ENCODE measurements at regions of chr11 and their contacts with region 1.

Region 1: GRCh38 chr11:121451986-121452608 is at the start of gene SORL1:
- DNase-seq: peak; percentile 92
- H3K4me3 Mint-ChIP-seq: peak within 1 kb of the TSS; percentile 93
- H3K27ac Mint-ChIP-seq: peak within 1 kb of the TSS; percentile 99
- H3K4me1 Mint-ChIP-seq: peaks cover 78% of the 10 kb centered on the region
- H3K27me3 Mint-ChIP-seq: no peaks in the 10 kb centered on the region
- total RNA-seq, gene SORL1: 28.4 and 30.3 TPM in 2 replicates

Region 2: DNA sequence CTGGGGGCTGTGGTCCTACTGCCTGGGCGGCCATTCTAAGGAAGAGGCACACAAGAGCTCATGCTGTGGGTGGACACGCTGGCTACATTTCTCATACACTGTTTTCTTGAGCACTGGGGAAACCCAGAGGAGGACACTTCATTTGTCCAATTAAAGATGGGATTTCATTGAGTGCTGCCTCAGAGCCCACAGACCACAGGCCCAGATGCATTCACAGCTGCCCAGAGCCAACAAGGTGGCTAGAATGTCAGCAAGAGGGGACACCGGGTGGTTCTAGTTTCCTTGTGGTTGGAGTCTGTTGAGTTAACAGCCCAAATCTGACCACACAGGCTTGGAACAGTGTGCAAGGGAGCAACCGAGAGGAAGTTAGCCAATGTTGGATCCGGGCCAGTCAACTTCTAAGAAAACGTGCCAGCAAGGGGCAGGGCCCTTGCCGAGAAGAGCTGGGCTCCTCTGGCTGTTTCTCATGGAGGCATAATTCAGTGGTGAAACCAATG is 35.0 kb before region 1 on chr11:
- intact Hi-C with region 1: loop called (anchors 2 kb)
- DNase-seq: peak; percentile 83
- H3K4me3 Mint-ChIP-seq: peak overlapping the region; percentile 42
- H3K27ac Mint-ChIP-seq: peak overlapping the region; percentile 72
- H3K4me1 Mint-ChIP-seq: peaks cover 55% of the 10 kb centered on the region
- H3K27me3 Mint-ChIP-seq: no peaks in the 10 kb centered on the region

Region 3: DNA sequence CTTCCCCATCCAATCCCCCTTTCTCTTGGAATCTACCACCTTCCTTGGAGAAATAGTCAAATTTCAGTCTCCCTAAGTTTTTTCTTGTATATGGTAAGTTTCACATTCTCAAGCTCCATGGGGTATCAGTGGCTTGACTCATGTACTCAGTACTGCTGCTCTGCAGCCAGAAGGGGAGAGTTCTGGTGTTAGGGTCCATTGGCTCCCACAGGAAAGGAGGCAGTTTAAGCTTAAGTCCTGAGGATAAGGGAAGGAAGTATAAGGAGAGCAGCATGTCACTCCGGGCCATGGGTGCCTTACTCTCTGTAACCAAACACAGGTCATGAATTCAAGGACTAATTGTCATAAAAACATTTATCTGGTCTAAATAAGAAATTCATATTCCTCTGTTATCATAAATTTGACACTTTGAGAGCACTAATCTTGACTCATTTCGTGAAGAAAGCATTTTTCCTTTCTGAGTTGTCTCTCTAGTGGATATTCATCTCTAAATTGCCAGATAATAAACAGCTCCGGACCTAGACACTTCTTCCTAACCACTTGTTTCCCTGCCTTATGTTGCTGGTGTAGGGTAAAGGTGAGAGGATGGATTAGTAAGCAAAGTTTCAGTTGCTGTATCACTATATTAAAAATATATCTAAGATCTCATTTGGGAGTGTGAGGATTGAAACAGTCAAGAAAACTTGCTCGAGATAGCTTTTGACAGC is 20.1 kb before region 1 on chr11:
- intact Hi-C with region 1: loop called (anchors 1 kb)
- DNase-seq: no peak
- H3K4me3 Mint-ChIP-seq: no peak overlapping the region
- H3K27ac Mint-ChIP-seq: peak overlapping the region; percentile 63
- H3K4me1 Mint-ChIP-seq: peaks cover 18% of the 10 kb centered on the region
- H3K27me3 Mint-ChIP-seq: peaks cover 2% of the 10 kb centered on the region

Region 4: DNA sequence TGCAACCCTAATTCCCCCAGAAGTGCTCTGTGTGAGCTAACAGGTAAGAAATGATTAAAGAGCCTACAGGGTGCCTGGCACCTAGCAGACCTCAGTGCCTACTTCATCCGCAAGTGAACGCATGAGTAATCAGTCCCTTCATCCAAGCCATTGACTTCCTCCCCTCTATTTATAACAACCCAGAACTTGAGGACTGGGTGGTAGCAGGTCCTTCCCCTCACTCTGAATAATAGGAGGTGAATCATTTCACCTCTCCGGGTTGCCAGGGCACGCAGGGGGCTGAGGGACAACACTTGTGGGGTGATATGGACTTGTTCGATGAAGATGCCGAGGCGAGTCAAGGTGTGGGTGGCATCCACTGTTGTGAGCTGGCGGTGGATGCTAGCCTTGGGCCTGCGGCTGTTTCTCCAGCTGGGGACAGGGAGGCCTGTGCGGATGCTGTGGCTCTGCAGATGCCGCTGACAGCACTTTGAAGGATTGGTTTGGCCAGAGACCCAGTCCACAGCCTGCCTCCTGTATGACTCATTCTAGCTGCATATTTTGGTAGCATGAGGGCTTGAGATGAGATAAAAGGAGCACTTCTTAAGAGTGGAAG is 12.4 kb after region 1 on chr11:
- intact Hi-C with region 1: loop called (anchors 1 kb)
- DNase-seq: peak; percentile 91
- H3K4me3 Mint-ChIP-seq: peak overlapping the region; percentile 70
- H3K27ac Mint-ChIP-seq: peak overlapping the region; percentile 99
- H3K4me1 Mint-ChIP-seq: peaks cover 94% of the 10 kb centered on the region
- H3K27me3 Mint-ChIP-seq: no peaks in the 10 kb centered on the region

Region 5: DNA sequence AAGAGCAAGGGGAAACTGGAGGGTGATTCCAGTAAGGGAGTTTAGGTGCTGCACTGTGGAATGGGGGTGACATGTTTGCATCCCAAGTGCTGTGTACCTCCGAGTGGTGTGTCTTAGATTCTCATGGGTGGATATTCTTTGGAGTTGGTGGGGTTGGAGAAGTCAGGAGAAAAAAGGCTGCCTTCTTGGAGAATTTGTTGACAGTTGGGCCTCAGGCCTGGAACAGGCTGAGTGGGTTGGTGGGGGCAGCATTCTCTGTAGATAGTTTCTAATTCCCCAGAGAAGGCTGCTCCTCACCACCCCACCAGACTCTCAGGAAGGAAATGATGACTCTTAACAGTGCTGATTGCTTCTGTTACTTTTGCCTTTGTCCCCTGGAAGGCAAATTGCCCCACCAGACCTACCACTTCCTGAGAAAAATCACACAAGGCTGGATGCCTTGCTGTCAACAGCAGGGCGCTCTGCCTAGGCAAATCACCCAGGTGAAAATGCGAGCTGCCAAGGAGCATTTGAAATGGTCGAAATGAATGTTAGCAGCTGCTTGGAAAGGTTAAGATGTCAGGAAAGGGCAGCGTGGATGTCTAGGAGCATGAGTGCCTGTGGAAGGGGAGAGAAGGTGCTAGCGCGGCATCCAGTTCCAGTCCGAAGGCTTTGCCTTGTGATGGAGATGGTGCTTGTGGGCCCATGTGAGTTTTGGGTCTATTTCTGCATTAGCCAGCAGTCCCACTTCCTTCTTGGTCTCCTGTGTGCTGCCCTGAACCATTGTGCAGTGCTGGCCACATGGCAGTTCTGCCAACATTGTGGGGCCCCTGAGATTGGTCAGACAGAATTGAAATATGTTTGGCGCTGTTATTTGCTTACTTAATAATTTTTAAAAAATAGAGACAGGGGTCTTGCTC is 30.4 kb after region 1 on chr11:
- intact Hi-C with region 1: loop called (anchors 1 kb)
- DNase-seq: peak; percentile 89
- H3K4me3 Mint-ChIP-seq: peak overlapping the region; percentile 77
- H3K27ac Mint-ChIP-seq: peak overlapping the region; percentile 92
- H3K4me1 Mint-ChIP-seq: peaks cover 45% of the 10 kb centered on the region
- H3K27me3 Mint-ChIP-seq: no peaks in the 10 kb centered on the region

Region 6: GRCh38 chr11:121534131-121535093 is 82.3 kb after region 1 on chr11:
- intact Hi-C with region 1: loop called (anchors 5 kb)
- DNase-seq: peak; percentile 40
- H3K4me3 Mint-ChIP-seq: no peak overlapping the region
- H3K27ac Mint-ChIP-seq: no peak overlapping the region
- H3K4me1 Mint-ChIP-seq: peaks cover 32% of the 10 kb centered on the region
- H3K27me3 Mint-ChIP-seq: no peaks in the 10 kb centered on the region

Region 7: DNA sequence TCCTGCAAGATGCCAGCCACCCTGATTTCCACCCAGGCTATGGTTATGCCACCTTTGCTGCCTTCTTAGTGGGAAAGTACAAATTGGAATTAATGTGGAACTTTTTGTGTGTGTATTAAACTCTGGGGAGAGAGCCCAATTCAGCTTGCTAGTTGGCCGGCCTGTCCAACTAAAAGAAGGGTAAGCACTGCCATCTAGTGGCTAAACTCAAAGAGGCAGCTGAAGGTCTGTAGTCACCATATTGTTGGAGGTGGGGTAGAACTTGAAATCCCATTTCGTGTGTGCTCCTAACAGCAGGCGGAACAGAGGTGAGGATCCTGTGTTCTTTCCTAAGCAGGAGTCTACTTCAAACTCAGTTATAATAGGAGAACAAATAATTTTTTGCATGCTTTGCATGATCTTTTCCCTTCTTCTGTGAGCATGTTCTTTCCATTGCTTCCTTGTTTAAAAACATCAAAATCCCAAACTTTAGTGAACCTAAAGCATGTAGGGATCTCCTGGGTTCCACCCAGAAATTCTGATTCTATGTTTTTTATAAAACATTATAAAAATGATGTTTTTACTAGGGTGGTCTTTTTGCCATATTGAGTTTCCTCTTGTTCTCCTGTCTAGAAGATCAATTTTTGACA is 139.4 kb after region 1 on chr11:
- intact Hi-C with region 1: loop called (anchors 2 kb)
- DNase-seq: peak; percentile 93
- H3K4me3 Mint-ChIP-seq: no peak overlapping the region
- H3K27ac Mint-ChIP-seq: no peak overlapping the region
- H3K4me1 Mint-ChIP-seq: peaks cover 19% of the 10 kb centered on the region
- H3K27me3 Mint-ChIP-seq: no peaks in the 10 kb centered on the region